Activated T-helper 1 cell treated with anti-CD3 and anti-CD28 coated beads, Interleukin-12 subunit alpha, Interleukin-12 subunit beta, Interleukin-2, Interleukin-4 antibody, amounts not matched to agents 30 ng/mL and 10 ng/mL and 1 ng/mL, durations not matched to agents 14 hours and 24 hours and 36 hours (primary cell): ENCODE measurements at regions of chr12 and their contacts with region 1.

Region 1: DNA sequence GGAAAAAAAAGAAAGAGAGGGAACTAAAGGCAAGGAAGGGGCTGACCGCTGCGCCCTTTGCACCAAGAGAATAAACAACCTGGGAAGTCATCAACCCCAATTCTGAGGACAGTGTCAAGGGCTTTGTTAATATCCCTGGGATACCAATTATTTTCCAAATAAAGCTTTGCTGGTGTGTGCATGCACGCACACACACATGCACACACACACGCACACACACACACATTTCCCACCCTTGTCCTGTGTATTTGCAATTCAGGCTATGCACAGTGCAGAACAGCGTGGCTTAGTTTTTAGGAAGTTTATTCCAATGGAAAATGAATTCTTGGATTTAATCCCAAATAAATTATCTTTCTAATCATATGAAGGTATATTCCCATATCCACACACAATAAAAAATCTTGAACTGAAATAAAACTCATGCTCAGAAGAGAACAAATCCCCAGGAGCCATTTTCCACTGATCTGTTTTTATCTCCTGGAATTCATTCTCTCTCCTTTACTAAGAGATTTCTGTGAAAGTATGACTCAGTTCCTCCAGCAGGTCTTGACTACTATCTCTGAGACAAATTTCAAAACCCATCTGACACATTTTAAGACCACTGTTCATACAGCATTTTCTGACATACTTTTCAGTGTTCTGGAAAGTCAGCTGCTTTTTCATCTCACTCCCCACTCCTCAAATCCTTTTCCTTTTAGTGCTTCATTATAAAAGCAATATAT is 334.4 kb upstream of the ATP2B1 start:
- DNase-seq: no peak
- H3K4me3 Mint-ChIP-seq: no peak overlapping the region
- H3K27ac Mint-ChIP-seq: no peak overlapping the region
- H3K4me1 Mint-ChIP-seq: peaks cover 17% of the 10 kb centered on the region
- H3K27me3 Mint-ChIP-seq: peaks cover 1% of the 10 kb centered on the region

Region 2: GRCh38 chr12:89856431-89856830 is 186.7 kb before region 1 on chr12:
- intact Hi-C with region 1: loop called (anchors 2 kb)
- DNase-seq: no peak
- H3K4me3 Mint-ChIP-seq: peak overlapping the region; percentile 25
- H3K27ac Mint-ChIP-seq: peak overlapping the region; percentile 62
- H3K4me1 Mint-ChIP-seq: peaks cover 40% of the 10 kb centered on the region
- H3K27me3 Mint-ChIP-seq: no peaks in the 10 kb centered on the region

Region 3: GRCh38 chr12:89960011-89960507 is 83.0 kb before region 1 on chr12:
- intact Hi-C with region 1: loop called (anchors 1 kb)
- DNase-seq: peak; percentile 18
- H3K4me3 Mint-ChIP-seq: no peak overlapping the region
- H3K27ac Mint-ChIP-seq: no peak overlapping the region
- H3K4me1 Mint-ChIP-seq: peaks cover 20% of the 10 kb centered on the region
- H3K27me3 Mint-ChIP-seq: peaks cover 17% of the 10 kb centered on the region

Region 4: DNA sequence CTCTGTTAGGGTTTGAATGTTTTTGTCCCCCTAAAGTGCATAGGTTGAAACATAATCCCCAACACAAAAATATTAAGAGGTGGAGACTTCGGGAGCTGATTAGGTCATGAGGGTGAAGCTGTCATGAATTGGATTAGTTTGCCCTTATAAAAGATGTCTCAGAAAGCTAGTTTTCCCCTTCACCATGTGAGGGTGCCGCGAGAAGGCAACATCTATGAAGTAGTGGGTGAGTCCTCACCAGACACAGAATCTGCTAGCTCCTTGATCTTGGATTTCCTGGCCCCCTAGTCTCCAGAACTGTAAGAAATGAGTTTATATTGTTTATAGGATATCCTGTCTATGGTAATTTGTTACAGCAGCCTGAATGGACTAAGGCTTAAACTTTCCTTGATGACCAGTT is 33.0 kb before region 1 on chr12:
- intact Hi-C with region 1: no loop called
- DNase-seq: no peak
- H3K4me3 Mint-ChIP-seq: no peak overlapping the region
- H3K27ac Mint-ChIP-seq: no peak overlapping the region
- H3K4me1 Mint-ChIP-seq: no peaks in the 10 kb centered on the region
- H3K27me3 Mint-ChIP-seq: no peaks in the 10 kb centered on the region

Region 5: GRCh38 chr12:90028635-90029051 is 14.4 kb before region 1 on chr12:
- intact Hi-C with region 1: no loop called
- DNase-seq: no peak
- H3K4me3 Mint-ChIP-seq: no peak overlapping the region
- H3K27ac Mint-ChIP-seq: no peak overlapping the region
- H3K4me1 Mint-ChIP-seq: peaks cover 10% of the 10 kb centered on the region
- H3K27me3 Mint-ChIP-seq: peaks cover 3% of the 10 kb centered on the region

Region 6: DNA sequence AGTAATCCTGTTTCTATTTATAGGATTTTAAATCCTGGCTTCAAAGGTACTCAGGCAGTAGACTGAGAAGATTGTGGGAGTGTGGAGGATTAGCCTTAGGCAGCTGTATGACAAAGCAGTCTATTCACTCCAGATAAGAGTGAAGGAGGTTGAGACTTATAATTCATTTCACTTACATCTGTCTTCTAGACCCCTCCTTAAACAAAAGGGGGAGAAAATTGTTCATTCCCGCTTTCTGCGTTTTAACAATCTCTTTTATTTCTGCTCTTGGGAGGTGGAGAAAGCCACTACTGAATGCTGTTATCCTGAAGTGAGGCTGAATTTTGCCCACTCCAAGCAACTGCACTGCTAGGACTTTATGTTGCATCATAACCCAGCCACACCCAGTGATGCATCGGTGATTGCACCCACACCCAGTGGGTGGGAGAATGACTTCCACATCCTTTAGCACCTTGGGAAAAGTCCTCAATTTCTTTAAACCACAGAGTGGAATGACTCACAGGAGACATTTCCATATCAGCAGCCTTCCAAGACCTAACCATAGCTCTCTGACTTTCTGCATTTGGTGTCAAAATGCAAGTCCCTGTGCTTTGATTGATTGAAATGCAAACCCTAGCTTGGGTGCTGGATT is 48.1 kb after region 1 on chr12:
- intact Hi-C with region 1: loop called (anchors 2 kb)
- DNase-seq: no peak
- H3K4me3 Mint-ChIP-seq: no peak overlapping the region
- H3K27ac Mint-ChIP-seq: no peak overlapping the region
- H3K4me1 Mint-ChIP-seq: peaks cover 16% of the 10 kb centered on the region
- H3K27me3 Mint-ChIP-seq: no peaks in the 10 kb centered on the region

Region 7: GRCh38 chr12:90791445-90791844 is 748.4 kb after region 1 on chr12:
- intact Hi-C with region 1: no loop called
- DNase-seq: no peak
- H3K4me3 Mint-ChIP-seq: no peak overlapping the region
- H3K27ac Mint-ChIP-seq: no peak overlapping the region
- H3K4me1 Mint-ChIP-seq: no peaks in the 10 kb centered on the region
- H3K27me3 Mint-ChIP-seq: no peaks in the 10 kb centered on the region